ENCODE measurements at regions of chr9 and their contacts with region 1.

Region 1: GRCh38 chr9:122092611-122093506 is at the start of gene TTLL11:
- DNase-seq: peak; percentile 27
- ATAC-seq: peak; percentile 97
- H3K4me3 ChIP-seq: peak within 1 kb of the TSS; percentile 62 to 69
- H3K27ac ChIP-seq: no peak within 1 kb of the TSS
- H3K4me1 ChIP-seq: no peaks in the 10 kb centered on the region
- H3K27me3 ChIP-seq: no peaks in the 10 kb centered on the region
- CTCF ChIP-seq: no peak
- total RNA-seq, gene TTLL11: 1.1 TPM

Region 2: GRCh38 chr9:121684381-121685140 is 408.3 kb before region 1 on chr9:
- CTCF ChIA-PET with region 1: no interaction called
- POLR2A ChIA-PET with region 1: no interaction called
- in situ Hi-C with region 1: no loop called
- intact Hi-C with region 1: no loop called
- DNase-seq: no peak
- ATAC-seq: no peak
- H3K4me3 ChIP-seq: no peak overlapping the region
- H3K27ac ChIP-seq: no peak overlapping the region
- H3K4me1 ChIP-seq: no peaks in the 10 kb centered on the region
- H3K27me3 ChIP-seq: no peaks in the 10 kb centered on the region
- CTCF ChIP-seq: no peak; the same call in 1 of the 2 replicates

Region 3: GRCh38 chr9:122065923-122066629 is 26.8 kb before region 1 on chr9:
- CTCF ChIA-PET with region 1: no interaction called
- POLR2A ChIA-PET with region 1: no interaction called
- in situ Hi-C with region 1: no loop called
- intact Hi-C with region 1: no loop called
- DNase-seq: no peak
- ATAC-seq: no peak
- H3K4me3 ChIP-seq: no peak overlapping the region
- H3K27ac ChIP-seq: no peak overlapping the region
- H3K4me1 ChIP-seq: no peaks in the 10 kb centered on the region
- H3K27me3 ChIP-seq: no peaks in the 10 kb centered on the region
- CTCF ChIP-seq: no peak

Region 4: GRCh38 chr9:122286764-122287163 is 193.9 kb after region 1 on chr9:
- CTCF ChIA-PET with region 1: no interaction called
- POLR2A ChIA-PET with region 1: no interaction called
- in situ Hi-C with region 1: no loop called
- intact Hi-C with region 1: no loop called
- DNase-seq: no peak
- ATAC-seq: no peak
- H3K4me3 ChIP-seq: no peak overlapping the region
- H3K27ac ChIP-seq: no peak overlapping the region
- H3K4me1 ChIP-seq: no peaks in the 10 kb centered on the region
- H3K27me3 ChIP-seq: no peaks in the 10 kb centered on the region
- CTCF ChIP-seq: no peak

Region 5: GRCh38 chr9:122453677-122454135 is 360.8 kb after region 1 on chr9:
- CTCF ChIA-PET with region 1: no interaction called
- POLR2A ChIA-PET with region 1: no interaction called
- in situ Hi-C with region 1: no loop called
- intact Hi-C with region 1: loop called (anchors 10 kb)
- DNase-seq: no peak
- ATAC-seq: no peak
- H3K4me3 ChIP-seq: no peak overlapping the region
- H3K27ac ChIP-seq: no peak overlapping the region
- H3K4me1 ChIP-seq: no peaks in the 10 kb centered on the region
- H3K27me3 ChIP-seq: 0 out of 2 replicates have a peak, but pooled peaks cover 2% of the 10 kb centered on the region
- CTCF ChIP-seq: no peak